K562 (cell line): ENCODE measurements at regions of chr17 and their contacts with region 1.

Region 1: DNA sequence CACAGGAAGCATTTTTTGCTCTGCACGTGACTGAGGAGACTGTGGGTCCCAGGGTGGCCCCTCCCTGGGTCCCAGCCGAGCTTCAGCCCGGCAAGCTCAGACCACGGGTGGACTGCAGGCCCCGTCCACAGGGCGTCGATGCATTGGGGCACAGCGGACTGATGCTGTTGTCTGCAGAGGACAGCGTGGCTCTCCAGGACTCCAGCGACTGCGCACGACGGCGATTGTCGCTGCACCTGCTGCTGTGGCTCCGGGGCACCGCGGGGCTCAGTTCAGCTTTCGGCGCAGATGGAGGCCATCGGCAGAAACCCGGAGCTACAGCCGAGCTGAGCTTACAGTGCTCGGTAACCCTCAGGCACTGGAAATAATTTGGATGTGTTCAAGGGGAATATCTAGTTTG is 88.5 kb upstream of the RPH3AL start:
- DNase-seq: no peak
- ATAC-seq: no peak
- H3K4me3 ChIP-seq: no peak overlapping the region
- H3K27ac ChIP-seq: no peak overlapping the region
- H3K4me1 ChIP-seq: peaks cover 0 to 6% of the 10 kb centered on the region in 2 experiments; a peak in 1 of 5 replicates
- H3K27me3 ChIP-seq: peaks cover 0 to 7% of the 10 kb centered on the region in 2 experiments; a peak in 2 of 5 replicates
- CTCF ChIP-seq: no peak
- EP300 ChIP-seq: no peak
- POLR2A ChIP-seq: no peak
- RAD21 ChIP-seq: no peak

Region 2: DNA sequence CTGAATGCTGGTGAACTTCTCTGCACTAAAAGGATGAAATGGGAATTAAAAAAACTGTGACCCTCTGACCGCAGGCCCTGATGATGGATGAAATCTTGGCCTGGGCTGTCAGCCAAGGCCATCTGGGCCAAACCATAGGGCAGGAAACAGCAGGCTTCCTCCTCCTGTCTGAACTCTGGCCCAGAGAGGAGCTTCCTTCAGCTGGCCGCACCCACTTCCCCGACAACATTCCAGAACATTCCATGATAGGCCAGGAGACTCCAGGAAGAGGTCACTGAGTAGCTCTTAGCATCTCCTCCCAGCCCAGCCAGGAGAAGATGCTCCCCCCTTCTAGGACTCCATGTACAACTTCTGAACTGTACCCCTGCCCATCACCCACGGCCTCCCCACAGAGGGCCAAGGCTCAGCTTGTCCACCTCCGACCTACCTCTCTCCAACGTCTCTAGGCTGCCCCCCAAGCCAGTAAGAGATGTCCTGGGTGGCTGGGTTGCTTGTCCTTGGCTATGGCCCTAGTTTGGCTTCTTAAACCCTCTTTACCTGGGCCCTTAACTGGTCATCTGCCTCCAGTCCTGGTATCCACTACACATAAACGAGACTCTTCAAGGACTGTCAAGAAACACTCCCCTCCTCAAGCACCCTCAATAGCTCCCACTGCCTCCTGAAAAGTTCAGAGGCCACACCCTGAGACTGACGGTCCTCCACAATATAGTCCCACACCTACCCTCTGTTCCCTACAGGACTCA is 90.3 kb before region 1 on chr17:
- CTCF ChIA-PET with region 1: no interaction called
- POLR2A ChIA-PET with region 1: no interaction called
- in situ Hi-C with region 1: no loop called
- intact Hi-C with region 1: no loop called
- DNase-seq: no peak
- ATAC-seq: no peak
- H3K4me3 ChIP-seq: no peak overlapping the region
- H3K27ac ChIP-seq: no peak overlapping the region
- H3K4me1 ChIP-seq: no peaks in the 10 kb centered on the region
- H3K27me3 ChIP-seq: peaks cover 0 to 9% of the 10 kb centered on the region in 2 experiments; a peak in 2 of 5 replicates
- CTCF ChIP-seq: no peak
- EP300 ChIP-seq: no peak
- POLR2A ChIP-seq: no peak
- RAD21 ChIP-seq: no peak

Region 3: GRCh38 chr17:491086-492021 is 50.2 kb after region 1 on chr17:
- CTCF ChIA-PET with region 1: no interaction called
- POLR2A ChIA-PET with region 1: interaction called, 12 read pairs
- in situ Hi-C with region 1: loop called (anchors 5 kb)
- intact Hi-C with region 1: no loop called
- DNase-seq: peak; percentile 18 to 73 (median 58)
- ATAC-seq: peak; percentile 53
- H3K4me3 ChIP-seq: peak overlapping the region; percentile 36; the same call in 1 of the 2 replicates
- H3K27ac ChIP-seq: no peak overlapping the region
- H3K4me1 ChIP-seq: peaks cover 3 to 21% of the 10 kb centered on the region in 2 experiments; a peak in 4 of 5 replicates
- H3K27me3 ChIP-seq: peaks cover 0 to 2% of the 10 kb centered on the region in 2 experiments; a peak in 1 of 5 replicates
- CTCF ChIP-seq: no peak
- EP300 ChIP-seq: no peak
- POLR2A ChIP-seq: no peak
- RAD21 ChIP-seq: no peak

Region 4: DNA sequence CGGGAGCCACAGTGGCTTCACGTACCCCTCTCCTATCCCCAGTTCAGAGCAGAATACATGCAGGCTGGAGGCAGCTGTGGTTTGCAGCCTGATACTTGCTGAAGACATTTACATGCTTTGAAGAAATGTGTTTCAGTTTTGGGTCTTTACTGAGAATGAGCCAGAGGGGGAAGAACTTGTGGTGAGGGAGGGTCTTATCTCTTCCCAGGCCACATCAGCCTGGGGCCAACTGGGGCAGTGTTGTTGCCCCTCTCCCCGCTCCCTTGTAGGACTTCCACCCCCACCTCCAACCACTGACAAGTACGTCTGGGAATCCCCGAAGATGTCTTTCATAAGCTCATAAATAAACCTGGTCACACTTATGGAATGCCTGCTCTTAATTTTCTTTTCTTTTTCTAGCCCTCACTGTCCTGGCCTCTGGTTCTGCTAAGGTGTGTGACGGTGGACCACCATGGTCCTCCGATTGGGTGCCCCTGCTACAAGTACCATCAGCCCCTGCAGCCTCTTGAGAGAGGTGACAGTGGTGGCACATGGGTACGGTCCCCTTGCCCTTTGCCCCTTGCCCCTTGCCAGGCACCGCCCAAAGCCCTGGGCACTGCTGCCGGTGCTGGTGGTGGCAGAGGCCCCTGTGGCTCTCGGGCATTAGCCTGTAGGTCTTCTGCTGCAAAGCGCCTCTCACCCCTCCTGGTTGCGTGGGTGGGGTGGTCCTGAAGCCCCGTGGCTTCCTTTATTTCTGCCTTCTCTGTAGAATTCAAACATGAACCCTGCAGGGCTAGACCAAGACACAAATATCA is 56.3 kb after region 1 on chr17:
- CTCF ChIA-PET with region 1: no interaction called
- POLR2A ChIA-PET with region 1: interaction called, 12 read pairs
- in situ Hi-C with region 1: loop called (anchors 5 kb)
- intact Hi-C with region 1: no loop called
- DNase-seq: no peak
- ATAC-seq: no peak
- H3K4me3 ChIP-seq: no peak overlapping the region
- H3K27ac ChIP-seq: no peak overlapping the region
- H3K4me1 ChIP-seq: peaks cover 0 to 3% of the 10 kb centered on the region in 2 experiments; a peak in 4 of 5 replicates
- H3K27me3 ChIP-seq: peaks cover 11 to 29% of the 10 kb centered on the region in 2 experiments; a peak in 3 of 5 replicates
- CTCF ChIP-seq: no peak
- EP300 ChIP-seq: no peak
- POLR2A ChIP-seq: no peak
- RAD21 ChIP-seq: no peak

Region 5: DNA sequence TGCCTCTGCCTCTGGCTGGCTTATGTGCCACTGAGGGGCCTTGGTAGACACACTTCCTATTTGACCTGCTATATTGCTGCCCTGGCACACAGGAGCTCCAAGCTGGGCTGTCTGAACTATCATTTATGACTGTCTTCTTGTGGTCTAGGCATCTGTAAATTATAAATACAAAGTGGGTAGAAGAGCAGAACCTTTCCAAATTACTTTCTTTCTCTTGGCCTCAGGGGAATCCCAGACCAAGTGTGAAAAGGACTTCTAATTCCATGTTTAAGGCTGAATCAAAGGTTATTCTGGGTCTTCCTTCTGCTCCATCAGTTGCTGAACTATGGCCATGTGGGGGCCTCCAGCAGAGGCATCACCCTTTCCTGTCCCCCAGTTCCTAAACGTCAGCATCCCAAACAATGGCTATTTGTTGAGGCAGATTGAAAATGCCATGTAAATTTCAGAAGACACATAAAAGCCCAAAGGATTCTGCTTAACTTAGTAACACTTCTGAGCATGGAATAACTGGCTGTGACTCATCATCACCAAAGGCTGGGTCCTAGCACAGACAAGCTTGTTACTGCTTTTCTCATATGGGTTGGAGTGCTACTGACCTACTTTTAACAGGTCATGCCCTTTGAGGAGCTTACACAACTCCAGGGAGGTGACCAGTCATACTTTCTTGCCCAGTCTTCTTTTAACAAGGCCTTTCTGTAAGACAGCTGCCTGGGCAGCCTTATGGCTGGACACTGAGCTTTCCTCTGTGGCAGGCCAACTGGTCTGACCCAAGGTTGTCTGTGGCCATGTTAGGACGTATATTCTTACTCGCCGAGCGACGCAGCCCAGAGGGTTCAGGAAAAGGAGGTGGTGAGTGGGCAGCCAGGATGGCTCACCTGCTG is 118.6 kb after region 1 on chr17:
- CTCF ChIA-PET with region 1: no interaction called
- POLR2A ChIA-PET with region 1: no interaction called
- in situ Hi-C with region 1: no loop called
- intact Hi-C with region 1: no loop called
- DNase-seq: no peak
- ATAC-seq: no peak
- H3K4me3 ChIP-seq: no peak overlapping the region
- H3K27ac ChIP-seq: no peak overlapping the region
- H3K4me1 ChIP-seq: no peaks in the 10 kb centered on the region
- H3K27me3 ChIP-seq: no peaks in the 10 kb centered on the region
- CTCF ChIP-seq: no peak
- EP300 ChIP-seq: no peak
- POLR2A ChIP-seq: no peak
- RAD21 ChIP-seq: no peak